Panc1 (cell line): ENCODE measurements at regions of chr9 and their contacts with region 1.

Region 1: DNA sequence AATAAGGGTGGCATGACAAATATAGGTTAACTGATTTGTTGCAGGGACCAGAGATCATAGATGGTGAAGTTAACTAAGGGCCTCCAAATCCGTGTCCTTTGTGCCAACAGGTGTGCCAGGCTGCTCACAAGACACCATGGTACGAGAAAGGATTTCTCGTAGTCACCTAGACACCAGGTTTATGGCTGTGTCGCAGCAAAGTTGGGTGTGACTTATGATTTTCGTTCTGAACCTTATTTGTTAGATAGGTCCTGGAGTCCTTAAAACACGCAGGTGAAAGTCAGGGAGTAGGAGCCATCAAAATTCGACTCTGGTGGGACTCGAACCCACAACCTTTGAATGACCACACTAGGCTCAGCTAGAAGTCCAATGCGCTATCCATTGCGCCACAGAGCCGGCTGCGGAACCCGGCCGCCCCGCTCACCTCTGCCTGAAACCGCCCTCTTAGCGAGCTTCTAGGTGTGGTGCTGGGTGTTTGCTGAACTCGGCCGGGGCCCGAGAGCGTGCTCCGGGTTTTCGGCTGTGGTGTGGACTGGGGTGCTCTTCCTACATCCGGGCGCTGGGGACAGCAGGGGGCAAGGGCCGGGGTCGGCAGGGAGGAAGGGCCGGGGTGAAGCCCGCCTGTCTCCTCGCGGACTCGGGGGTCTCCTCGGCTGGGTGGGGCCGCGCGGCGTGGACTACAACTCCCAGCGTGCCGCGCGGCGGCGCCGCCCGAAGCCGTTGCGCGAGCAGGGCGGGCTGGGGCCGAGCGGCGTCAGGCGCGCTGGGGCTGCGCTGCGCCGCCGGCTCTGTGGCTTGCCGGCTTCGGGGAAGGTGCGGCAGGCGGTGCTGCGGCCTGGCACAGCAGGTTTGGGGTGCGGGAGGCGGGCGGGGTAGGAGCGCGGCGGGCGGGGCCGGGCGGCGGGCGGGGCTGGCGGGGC is at the start of gene SLC27A4:
- DNase-seq: peak; percentile 96
- ATAC-seq: peak; percentile 91
- H3K4me3 ChIP-seq: peak within 1 kb of the TSS; percentile 69 to 80
- H3K27ac ChIP-seq: peak within 1 kb of the TSS; percentile 74
- H3K4me1 ChIP-seq: no peaks in the 10 kb centered on the region
- H3K27me3 ChIP-seq: no peaks in the 10 kb centered on the region
- CTCF ChIP-seq: no peak
- total RNA-seq, gene SLC27A4: 20.3 TPM

Region 2: GRCh38 chr9:126781186-126782052 is 1558.6 kb before region 1 on chr9:
- CTCF ChIA-PET with region 1: no interaction called
- POLR2A ChIA-PET with region 1: no interaction called
- in situ Hi-C with region 1: no loop called
- intact Hi-C with region 1: no loop called
- DNase-seq: no peak
- ATAC-seq: peak; percentile 96
- H3K4me3 ChIP-seq: peak overlapping the region; percentile 11 to 36; a peak in 3 of 4 replicates
- H3K27ac ChIP-seq: no peak overlapping the region
- H3K4me1 ChIP-seq: peaks cover 2% of the 10 kb centered on the region; the same call in 1 of the 2 replicates
- H3K27me3 ChIP-seq: no peaks in the 10 kb centered on the region
- CTCF ChIP-seq: peak; percentile 84

Region 3: DNA sequence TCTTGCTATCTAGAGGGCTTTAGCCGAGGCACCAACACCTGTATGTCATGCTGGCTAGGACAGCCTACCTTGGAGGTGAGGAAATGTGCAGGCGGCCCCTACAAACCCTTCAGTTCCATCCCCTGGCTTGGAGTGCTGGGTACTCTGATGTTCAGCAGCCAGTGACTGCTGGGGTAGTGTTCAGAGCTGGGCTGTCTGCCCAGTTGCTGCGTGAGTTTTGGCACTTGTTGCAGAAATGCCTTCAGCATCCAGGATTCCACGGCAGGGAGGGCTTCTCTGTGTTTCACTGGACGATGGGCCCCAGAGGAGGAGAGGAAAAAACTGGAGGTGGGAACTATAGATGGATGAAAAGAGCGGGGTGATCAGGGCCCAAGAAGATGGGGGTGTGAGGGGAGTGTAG is 53.6 kb before region 1 on chr9:
- CTCF ChIA-PET with region 1: interaction called, 10 read pairs
- POLR2A ChIA-PET with region 1: no interaction called
- in situ Hi-C with region 1: no loop called
- intact Hi-C with region 1: loop called (anchors 10 kb)
- DNase-seq: no peak
- ATAC-seq: no peak
- H3K4me3 ChIP-seq: no peak overlapping the region
- H3K27ac ChIP-seq: no peak overlapping the region
- H3K4me1 ChIP-seq: no peaks in the 10 kb centered on the region
- H3K27me3 ChIP-seq: no peaks in the 10 kb centered on the region
- CTCF ChIP-seq: no peak

Region 4: DNA sequence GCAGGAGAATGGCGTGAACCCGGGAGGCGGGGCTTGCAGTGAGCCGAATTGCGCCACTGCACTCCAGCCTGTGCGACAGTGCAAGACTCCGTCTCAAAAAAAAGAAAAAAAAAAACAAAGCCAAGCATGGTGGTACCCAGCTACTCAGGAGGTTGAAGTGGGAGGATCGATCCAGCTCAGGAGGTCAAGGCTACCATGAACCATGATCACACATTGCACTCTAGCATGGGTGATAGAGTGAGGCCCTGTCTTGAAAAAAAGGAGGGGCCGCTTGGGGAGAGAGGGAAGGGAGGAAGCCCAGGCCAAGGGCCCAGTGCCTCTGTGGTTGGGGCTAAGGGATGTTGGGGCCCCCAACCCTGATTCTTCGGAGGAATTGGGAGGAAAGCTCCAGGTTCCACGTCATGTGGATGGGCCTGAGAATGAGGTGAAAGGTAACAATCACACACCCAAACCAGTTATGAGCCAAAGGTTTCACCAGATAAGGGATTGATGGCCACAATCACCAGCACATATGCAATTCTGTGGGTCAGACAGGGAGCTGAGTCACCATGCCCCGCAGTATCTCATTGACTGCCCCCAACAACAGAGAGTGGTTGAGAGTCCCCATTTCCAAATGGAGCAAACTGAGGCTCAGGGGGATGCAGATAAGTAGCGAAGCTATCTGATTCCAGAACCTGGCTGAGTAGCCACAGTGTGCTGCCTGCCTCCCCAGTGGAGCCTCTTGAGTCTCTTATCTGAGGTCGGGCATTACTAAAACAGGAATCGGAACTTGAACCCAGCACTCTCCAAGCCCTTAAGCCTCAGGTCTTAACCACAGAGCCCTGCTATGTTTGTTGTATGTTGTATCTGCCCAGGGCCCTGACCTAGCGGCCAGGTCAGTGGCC is 43.5 kb before region 1 on chr9:
- CTCF ChIA-PET with region 1: interaction called, 5 read pairs
- POLR2A ChIA-PET with region 1: no interaction called
- in situ Hi-C with region 1: no loop called
- intact Hi-C with region 1: loop called (anchors 10 kb)
- DNase-seq: no peak
- ATAC-seq: no peak
- H3K4me3 ChIP-seq: no peak overlapping the region
- H3K27ac ChIP-seq: no peak overlapping the region
- H3K4me1 ChIP-seq: peaks cover 3% of the 10 kb centered on the region
- H3K27me3 ChIP-seq: no peaks in the 10 kb centered on the region
- CTCF ChIP-seq: no peak